Mammary epithelial cell (primary cell): ENCODE measurements at regions of chr4 and their contacts with region 1.

Region 1: GRCh38 chr4:1154523-1155182 is 17.7 kb downstream of the SPON2 start:
- DNase-seq: no peak
- H3K4me3 ChIP-seq: no peak overlapping the region
- H3K27ac ChIP-seq: no peak overlapping the region
- H3K4me1 ChIP-seq: no peaks in the 10 kb centered on the region
- H3K27me3 ChIP-seq: peaks cover 4% of the 10 kb centered on the region
- CTCF ChIP-seq: no peak

Region 2: GRCh38 chr4:688854-689681 is 465.6 kb before region 1 on chr4 and contains the start of gene SLC49A3:
- CTCF ChIA-PET with region 1: no interaction called
- dilution Hi-C with region 1: no loop called
- in situ Hi-C with region 1: no loop called
- intact Hi-C with region 1: no loop called
- DNase-seq: no peak
- H3K4me3 ChIP-seq: no peak within 1 kb of the TSS
- H3K27ac ChIP-seq: no peak within 1 kb of the TSS
- H3K4me1 ChIP-seq: peaks cover 10% of the 10 kb centered on the region
- H3K27me3 ChIP-seq: no peaks in the 10 kb centered on the region
- CTCF ChIP-seq: no peak
- total RNA-seq, gene SLC49A3: 0.83 TPM in 1 of 2 donors, not detected in the other

Region 3: GRCh38 chr4:1200425-1201035 is 45.9 kb after region 1 on chr4:
- CTCF ChIA-PET with region 1: no interaction called
- dilution Hi-C with region 1: loop called (anchors 5 kb)
- in situ Hi-C with region 1: no loop called
- intact Hi-C with region 1: no loop called
- DNase-seq: no peak
- H3K4me3 ChIP-seq: no peak overlapping the region
- H3K27ac ChIP-seq: no peak overlapping the region
- H3K4me1 ChIP-seq: peaks cover 9% of the 10 kb centered on the region
- H3K27me3 ChIP-seq: no peaks in the 10 kb centered on the region
- CTCF ChIP-seq: no peak

Region 4: GRCh38 chr4:1243451-1244080 is 88.9 kb after region 1 on chr4:
- CTCF ChIA-PET with region 1: no interaction called
- dilution Hi-C with region 1: loop called (anchors 5 kb)
- in situ Hi-C with region 1: no loop called
- intact Hi-C with region 1: no loop called
- DNase-seq: no peak
- H3K4me3 ChIP-seq: no peak overlapping the region
- H3K27ac ChIP-seq: no peak overlapping the region
- H3K4me1 ChIP-seq: peaks cover 21% of the 10 kb centered on the region
- H3K27me3 ChIP-seq: no peaks in the 10 kb centered on the region
- CTCF ChIP-seq: no peak